Naive thymus-derived CD4-positive, alpha-beta T cell (primary cell): ENCODE measurements at regions of chr2 and their contacts with region 1.

Region 1: DNA sequence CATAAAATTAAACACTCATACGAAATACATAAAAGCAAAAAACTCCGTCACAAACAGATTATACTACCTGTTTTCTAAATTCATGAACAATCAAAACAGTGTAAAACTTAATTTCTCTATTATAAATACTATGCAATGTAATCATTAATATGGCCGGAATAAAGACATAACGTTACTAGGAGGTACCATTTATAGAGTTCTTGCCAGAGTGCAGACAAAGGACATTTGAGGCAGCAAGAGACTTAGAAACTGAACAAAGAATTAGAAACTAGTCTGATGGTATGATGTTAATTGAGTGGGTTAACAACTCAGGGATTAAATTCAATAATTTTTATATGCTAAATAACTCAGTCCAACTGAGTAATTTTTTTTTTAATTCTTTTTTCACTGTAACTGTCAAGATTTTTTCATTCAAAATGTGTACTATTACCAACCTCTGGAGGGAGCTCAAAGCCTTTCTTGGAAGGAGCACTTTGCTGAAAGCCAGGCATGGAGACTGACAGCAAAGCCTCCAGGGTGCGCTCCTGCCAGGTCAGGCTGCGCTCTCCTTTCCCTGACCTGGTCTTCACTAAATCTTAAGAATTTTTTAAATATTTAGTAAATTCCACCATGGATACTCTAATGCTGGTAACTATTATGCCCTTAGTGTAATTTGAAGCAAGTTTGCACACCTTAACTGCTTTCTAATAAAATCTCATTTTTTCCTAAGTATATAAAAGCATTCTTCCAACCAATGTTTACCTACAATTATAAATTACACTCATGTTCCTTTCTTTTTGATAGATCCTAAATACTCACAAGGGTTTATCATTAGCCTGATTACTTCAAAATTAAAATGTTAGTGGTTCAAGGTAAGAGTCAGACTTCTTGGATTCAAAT is 34.1 kb downstream of the WDR35 start:
- DNase-seq: peak in 8 of 9 donors; percentile 19 to 64 (median 48)
- ATAC-seq: peak; percentile 88
- H3K4me3 ChIP-seq: no peak overlapping the region
- H3K4me3 Mint-ChIP-seq: no peak overlapping the region
- H3K27ac ChIP-seq: no peak overlapping the region
- H3K27ac Mint-ChIP-seq: no peak overlapping the region
- H3K4me1 ChIP-seq: no peaks in the 10 kb centered on the region
- H3K4me1 Mint-ChIP-seq: no peaks in the 10 kb centered on the region
- H3K27me3 ChIP-seq: no peaks in the 10 kb centered on the region
- H3K27me3 Mint-ChIP-seq: no peaks in the 10 kb centered on the region

Region 2: DNA sequence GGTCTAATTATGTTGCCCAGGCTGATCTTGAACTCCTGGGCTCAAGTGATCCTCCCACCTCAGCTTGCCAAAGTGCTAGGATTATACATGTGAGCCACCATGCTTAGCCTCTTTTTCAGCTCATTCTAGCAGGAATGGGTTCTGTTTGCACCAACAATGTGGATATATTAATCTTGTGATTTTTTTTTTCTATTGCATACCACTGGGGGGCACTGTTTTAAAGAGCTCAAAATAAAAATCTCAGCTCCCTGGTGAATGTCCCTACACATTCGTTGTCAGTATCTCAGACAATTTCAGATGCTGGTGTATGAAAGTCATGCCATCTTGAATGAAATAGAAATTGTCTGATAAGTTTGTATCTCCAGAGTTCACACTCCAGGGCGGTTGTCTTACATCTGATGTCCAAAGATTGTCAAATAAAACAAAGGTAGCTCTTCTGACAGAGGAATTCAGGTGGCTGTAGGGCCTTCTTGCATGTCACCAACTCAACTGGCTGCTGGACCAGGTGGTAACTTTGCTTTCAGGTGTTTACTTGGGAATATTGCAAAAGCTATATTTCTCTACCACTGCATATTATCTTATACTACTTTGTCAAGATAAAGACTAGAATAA is 59.8 kb after region 1 on chr2:
- CTCF ChIA-PET with region 1: no interaction called
- POLR2A ChIA-PET with region 1: no interaction called
- intact Hi-C with region 1: loop called (anchors 2 kb)
- DNase-seq: peak in 5 of 9 donors; percentile 33 to 55 (median 43)
- ATAC-seq: peak; percentile 82
- H3K4me3 ChIP-seq: no peak overlapping the region
- H3K4me3 Mint-ChIP-seq: no peak overlapping the region
- H3K27ac ChIP-seq: no peak overlapping the region
- H3K27ac Mint-ChIP-seq: no peak overlapping the region
- H3K4me1 ChIP-seq: peaks cover 0 to 3% of the 10 kb centered on the region in 2 donors
- H3K4me1 Mint-ChIP-seq: peaks cover 5 to 16% (median 14%) of the 10 kb centered on the region in 7 donors
- H3K27me3 ChIP-seq: no peaks in the 10 kb centered on the region
- H3K27me3 Mint-ChIP-seq: peaks cover 33 to 48% (median 36%) of the 10 kb centered on the region in 5 donors

Region 3: GRCh38 chr2:20040489-20041172 is 84.8 kb after region 1 on chr2:
- CTCF ChIA-PET with region 1: no interaction called
- POLR2A ChIA-PET with region 1: no interaction called
- intact Hi-C with region 1: no loop called
- DNase-seq: no peak
- ATAC-seq: no peak
- H3K4me3 ChIP-seq: no peak overlapping the region
- H3K4me3 Mint-ChIP-seq: no peak overlapping the region
- H3K27ac ChIP-seq: no peak overlapping the region
- H3K27ac Mint-ChIP-seq: no peak overlapping the region
- H3K4me1 ChIP-seq: peaks cover 0 to 3% of the 10 kb centered on the region in 2 donors
- H3K4me1 Mint-ChIP-seq: peaks cover 9 to 28% (median 23%) of the 10 kb centered on the region in 7 donors
- H3K27me3 ChIP-seq: no peaks in the 10 kb centered on the region
- H3K27me3 Mint-ChIP-seq: no peaks in the 10 kb centered on the region

Region 4: GRCh38 chr2:20097879-20098714 is 142.3 kb after region 1 on chr2:
- CTCF ChIA-PET with region 1: interaction called, 6 read pairs
- POLR2A ChIA-PET with region 1: interaction called, 3 read pairs
- intact Hi-C with region 1: loop called (anchors 1 kb)
- DNase-seq: peak; percentile 58 to 73 (median 67)
- ATAC-seq: peak; percentile 94
- H3K4me3 ChIP-seq: no peak overlapping the region
- H3K4me3 Mint-ChIP-seq: no peak overlapping the region
- H3K27ac ChIP-seq: no peak overlapping the region
- H3K27ac Mint-ChIP-seq: no peak overlapping the region
- H3K4me1 ChIP-seq: no peaks in the 10 kb centered on the region
- H3K4me1 Mint-ChIP-seq: peaks cover 0 to 4% (median 0%) of the 10 kb centered on the region in 7 donors
- H3K27me3 ChIP-seq: no peaks in the 10 kb centered on the region
- H3K27me3 Mint-ChIP-seq: peaks cover 12 to 21% (median 13%) of the 10 kb centered on the region in 5 donors

Region 5: DNA sequence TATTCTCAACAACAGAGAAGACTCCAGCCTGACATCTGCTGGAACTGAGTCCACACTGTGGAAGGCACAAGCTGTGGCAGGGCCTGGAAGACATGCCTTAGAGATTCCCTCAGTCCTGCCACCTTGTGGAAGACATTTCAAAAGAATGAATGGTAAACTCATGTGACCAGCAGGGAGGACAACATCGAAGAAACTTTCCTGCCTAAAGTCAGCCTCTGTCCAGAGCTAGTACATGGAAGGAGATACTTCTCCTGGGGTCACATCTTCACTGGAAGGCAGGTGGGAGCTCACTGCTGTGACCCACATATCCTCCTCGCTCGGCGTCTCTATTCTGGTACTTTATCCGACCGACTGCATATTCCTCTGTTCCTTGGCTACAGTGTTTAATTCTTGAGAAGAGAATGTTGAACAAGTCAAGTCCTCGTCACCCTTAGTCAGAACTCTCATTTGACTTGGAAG is 335.4 kb after region 1 on chr2:
- CTCF ChIA-PET with region 1: no interaction called
- POLR2A ChIA-PET with region 1: no interaction called
- intact Hi-C with region 1: loop called in 1 of 2 experiments (anchors 1 kb)
- DNase-seq: peak in 2 of 9 donors; percentile 10 to 25
- ATAC-seq: peak; percentile 77
- H3K4me3 ChIP-seq: no peak overlapping the region
- H3K4me3 Mint-ChIP-seq: no peak overlapping the region
- H3K27ac ChIP-seq: no peak overlapping the region
- H3K27ac Mint-ChIP-seq: peak overlapping the region in 5 of 9 donors; percentile 6 to 71 (median 46)
- H3K4me1 ChIP-seq: peaks cover 0 to 3% of the 10 kb centered on the region in 2 donors
- H3K4me1 Mint-ChIP-seq: peaks cover 0 to 18% (median 9%) of the 10 kb centered on the region in 7 donors
- H3K27me3 ChIP-seq: no peaks in the 10 kb centered on the region
- H3K27me3 Mint-ChIP-seq: no peaks in the 10 kb centered on the region

Region 6: GRCh38 chr2:20642055-20642971 is 686.5 kb after region 1 on chr2:
- CTCF ChIA-PET with region 1: no interaction called
- POLR2A ChIA-PET with region 1: no interaction called
- intact Hi-C with region 1: loop called in 1 of 2 experiments (anchors 5 kb)
- DNase-seq: peak; percentile 45 to 79 (median 74)
- ATAC-seq: peak; percentile 96
- H3K4me3 ChIP-seq: no peak overlapping the region
- H3K4me3 Mint-ChIP-seq: no peak overlapping the region
- H3K27ac ChIP-seq: no peak overlapping the region
- H3K27ac Mint-ChIP-seq: peak overlapping the region in 1 of 9 donors; percentile 65
- H3K4me1 ChIP-seq: no peaks in the 10 kb centered on the region
- H3K4me1 Mint-ChIP-seq: peaks cover 0 to 12% (median 7%) of the 10 kb centered on the region in 7 donors
- H3K27me3 ChIP-seq: no peaks in the 10 kb centered on the region
- H3K27me3 Mint-ChIP-seq: no peaks in the 10 kb centered on the region